HepG2 (cell line): ENCODE measurements at regions of chr9 and their contacts with region 1.

Region 1: DNA sequence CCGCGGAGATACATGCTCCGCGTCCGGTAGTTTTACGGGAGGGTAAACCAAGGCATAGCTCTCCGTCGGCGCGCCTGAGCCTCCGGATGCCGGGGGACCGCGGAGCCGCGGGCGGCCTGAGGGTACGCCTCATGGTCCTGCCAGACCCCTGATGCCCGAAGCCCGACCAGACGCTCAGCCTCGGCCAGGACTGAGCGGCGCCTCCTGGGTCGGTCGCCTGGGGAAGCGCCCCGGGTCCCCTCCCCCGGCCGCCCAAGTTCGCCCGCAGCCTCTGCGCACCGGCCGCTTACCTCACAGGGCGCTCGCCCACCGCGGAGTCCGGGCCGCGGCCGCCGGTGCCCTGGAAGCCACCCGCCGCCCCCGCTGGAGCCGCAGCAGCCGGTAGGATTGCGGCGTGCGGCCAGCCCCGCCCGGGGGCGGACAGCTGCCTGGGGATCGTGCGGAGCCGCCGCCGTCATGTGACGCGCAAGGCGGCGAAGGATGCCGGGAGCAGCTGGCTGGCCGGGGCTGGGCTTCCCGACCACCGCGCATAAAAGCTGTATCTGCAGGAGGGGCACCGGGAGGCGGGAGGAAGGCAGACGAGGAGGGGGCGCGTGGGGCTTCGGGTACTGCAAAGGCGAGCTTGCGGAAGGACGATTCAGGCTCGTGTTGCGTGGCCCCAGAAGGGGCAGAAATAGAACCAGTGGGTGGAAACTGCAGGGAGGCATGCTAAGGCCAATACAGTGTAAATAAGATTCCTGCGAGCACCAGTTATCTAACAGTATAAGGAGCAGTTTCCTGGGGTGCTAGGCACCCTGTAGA is at the start of gene FBXO10:
- DNase-seq: no peak
- ATAC-seq: peak; percentile 93
- H3K4me3 ChIP-seq: peak within 1 kb of the TSS; percentile 61 to 73 (median 69)
- H3K27ac ChIP-seq: peak within 1 kb of the TSS; percentile 39
- H3K4me1 ChIP-seq: peaks cover 19% of the 10 kb centered on the region
- H3K27me3 ChIP-seq: no peaks in the 10 kb centered on the region
- CTCF ChIP-seq: no peak
- EP300 ChIP-seq: no peak
- POLR2A ChIP-seq: peak; percentile 17 to 55; a peak in 1 of 4 replicates
- RAD21 ChIP-seq: 0 out of 2 replicates have a peak, but pooled peaks have one; percentile 49
- total RNA-seq, gene FBXO10: 2.8 and 3.1 TPM in 2 replicates

Region 2: GRCh38 chr9:37511016-37512010 is 64.8 kb before region 1 on chr9:
- CTCF ChIA-PET with region 1: no interaction called
- POLR2A ChIA-PET with region 1: no interaction called
- in situ Hi-C with region 1: loop called (anchors 10 kb)
- intact Hi-C with region 1: no loop called
- DNase-seq: peak; percentile 29
- ATAC-seq: peak; percentile 21
- H3K4me3 ChIP-seq: no peak overlapping the region
- H3K27ac ChIP-seq: no peak overlapping the region
- H3K4me1 ChIP-seq: peaks cover 44% of the 10 kb centered on the region
- H3K27me3 ChIP-seq: no peaks in the 10 kb centered on the region
- CTCF ChIP-seq: peak; percentile 56
- EP300 ChIP-seq: no peak
- POLR2A ChIP-seq: no peak
- RAD21 ChIP-seq: no peak

Region 3: DNA sequence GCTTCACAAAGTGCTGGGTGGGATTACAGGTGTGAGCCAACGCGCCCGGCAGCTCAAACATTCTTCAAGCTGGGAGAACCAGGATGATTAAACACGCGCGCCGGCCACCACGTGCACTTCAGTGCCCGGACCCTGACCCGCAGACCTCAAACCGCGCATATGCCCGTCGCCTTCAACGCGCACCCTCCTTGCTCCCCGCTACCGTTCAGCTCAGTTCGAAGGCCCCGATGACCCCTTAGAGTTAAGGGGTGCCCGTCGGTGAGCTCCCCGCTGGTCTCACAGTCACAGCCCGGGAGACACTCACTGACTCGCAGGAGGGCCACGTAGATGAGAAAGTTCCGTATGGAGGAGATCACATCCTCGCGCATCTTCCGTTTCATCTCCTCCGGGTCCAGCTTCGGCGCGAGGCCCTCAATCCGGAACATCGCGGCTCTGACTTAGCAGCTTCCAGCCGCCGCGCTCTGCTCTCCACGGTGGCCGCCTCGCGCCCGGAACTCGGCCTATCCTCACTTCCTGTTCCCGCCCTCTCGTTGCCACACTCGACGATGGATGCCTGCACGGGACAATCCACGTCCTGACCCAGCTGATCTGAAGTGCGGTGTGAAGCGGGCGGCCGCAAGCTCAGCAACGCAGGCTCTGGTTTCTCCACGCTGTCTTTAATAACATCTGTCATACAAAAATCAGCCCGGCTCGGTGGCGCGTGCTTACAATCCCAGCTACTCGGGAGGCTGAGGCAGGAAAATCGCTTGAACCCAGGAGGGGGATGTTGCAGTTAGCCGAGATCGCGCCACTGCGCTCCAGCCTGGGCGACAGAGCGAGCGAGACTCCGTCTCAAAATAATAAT is 16.2 kb after region 1 on chr9 and contains the start of gene TOMM5:
- CTCF ChIA-PET with region 1: no interaction called
- POLR2A ChIA-PET with region 1: interaction called, 12 read pairs
- in situ Hi-C with region 1: no loop called
- intact Hi-C with region 1: loop called (anchors 1 kb)
- DNase-seq: peak; percentile 87
- ATAC-seq: peak; percentile 95
- H3K4me3 ChIP-seq: peak within 1 kb of the TSS; percentile 64 to 89 (median 80)
- H3K27ac ChIP-seq: peak within 1 kb of the TSS; percentile 87
- H3K4me1 ChIP-seq: peaks cover 54% of the 10 kb centered on the region
- H3K27me3 ChIP-seq: no peaks in the 10 kb centered on the region; a peak in 1 of 5 replicates
- CTCF ChIP-seq: peak; percentile 32; the same call in 1 of the 2 replicates
- EP300 ChIP-seq: peak; percentile 19 to 71; a peak in 1 of 4 replicates
- POLR2A ChIP-seq: peak; percentile 95 to 97
- RAD21 ChIP-seq: no peak; the same call in 1 of the 2 replicates
- total RNA-seq, gene TOMM5: 315 and 450 TPM in 2 replicates